Panc1 (cell line): ENCODE measurements at regions of chr1 and their contacts with region 1.

Region 1: DNA sequence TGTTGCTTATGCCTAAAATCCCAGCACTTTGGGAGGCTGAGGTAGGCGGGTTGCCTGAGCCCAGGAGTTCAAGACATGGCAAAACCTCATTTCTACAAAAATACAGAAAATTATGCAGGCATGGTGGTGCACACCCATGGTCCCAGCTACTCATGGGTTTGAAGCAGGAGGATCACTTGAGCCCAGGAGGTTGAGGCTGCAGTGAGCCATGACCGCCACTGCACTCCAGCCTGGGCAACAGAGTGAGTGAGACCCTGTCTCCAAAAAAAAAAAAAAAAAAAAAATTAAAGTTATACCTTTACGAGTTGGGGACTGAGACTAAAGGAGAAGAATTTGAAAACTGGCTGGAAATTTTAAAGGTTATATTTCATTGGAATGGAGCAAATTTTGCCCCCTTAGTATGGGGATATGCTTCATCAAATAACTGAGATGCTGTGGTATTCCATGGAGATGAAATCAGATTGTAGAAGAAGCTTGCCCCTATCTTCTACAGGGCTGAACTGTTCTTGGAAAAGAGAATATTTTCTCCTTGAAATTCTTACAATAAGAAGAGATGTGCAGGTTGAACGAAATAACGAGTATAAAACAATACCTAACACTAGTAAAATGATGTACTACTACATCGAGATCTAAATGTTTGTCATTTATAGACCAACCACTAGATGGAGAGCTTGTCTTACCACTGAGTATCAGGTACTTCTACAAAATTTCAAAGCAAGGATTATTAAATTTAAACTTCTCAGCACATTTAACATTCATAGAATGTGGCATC is 34.9 kb upstream of the SCYL3 start:
- DNase-seq: peak; percentile 24
- ATAC-seq: peak; percentile 82; the same call in 1 of the 2 replicates
- H3K4me3 ChIP-seq: no peak overlapping the region
- H3K27ac ChIP-seq: no peak overlapping the region; the same call in 1 of the 2 replicates
- H3K4me1 ChIP-seq: peaks cover 4% of the 10 kb centered on the region; the same call in 1 of the 2 replicates
- H3K27me3 ChIP-seq: no peaks in the 10 kb centered on the region
- CTCF ChIP-seq: peak; percentile 74; the same call in 1 of the 2 replicates

Region 2: DNA sequence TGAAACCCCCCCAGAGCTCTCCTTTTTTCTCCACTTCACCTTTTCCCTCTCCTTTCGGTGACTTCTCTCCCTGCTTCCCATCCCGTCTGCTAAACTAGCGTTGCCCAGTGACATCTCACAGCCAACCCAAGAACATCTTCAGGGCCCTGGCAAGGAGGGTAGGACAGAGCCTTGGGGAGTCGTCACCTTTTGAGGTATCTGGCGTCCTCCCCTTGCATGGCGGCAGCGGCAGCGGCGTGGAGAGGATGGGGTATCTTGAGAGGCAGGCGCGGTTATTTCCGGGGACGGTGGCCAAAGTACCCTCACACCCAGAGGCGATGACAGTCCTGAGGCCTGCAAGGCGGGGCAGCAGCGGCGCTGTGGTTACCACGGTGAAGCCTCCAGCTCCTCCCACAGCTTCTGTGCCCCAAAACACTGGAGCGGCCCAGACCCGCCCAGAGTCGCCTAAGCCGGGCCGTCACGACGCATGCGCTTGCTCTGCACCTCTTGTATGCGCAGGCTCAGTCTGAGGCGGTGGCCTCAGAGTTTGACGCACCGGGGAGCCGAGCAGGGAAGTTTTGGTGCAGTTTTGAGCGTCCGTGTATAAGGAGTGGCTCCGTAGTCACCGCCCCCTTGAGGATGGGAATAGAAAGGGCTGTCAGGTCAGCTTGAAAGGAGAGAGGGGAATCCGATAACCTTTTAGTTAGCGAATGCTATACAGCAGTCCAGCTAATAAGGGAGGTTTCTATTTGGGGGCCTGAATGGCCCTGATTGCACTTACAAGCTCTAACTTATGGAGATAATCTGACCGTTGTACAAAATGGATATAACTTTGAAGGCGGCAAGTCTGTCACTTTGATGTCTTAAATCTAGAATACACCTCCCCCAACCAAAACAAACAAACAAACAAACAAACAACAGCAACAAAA is 145.9 kb after region 1 on chr1 and contains the start of gene KIFAP3:
- CTCF ChIA-PET with region 1: no interaction called
- POLR2A ChIA-PET with region 1: no interaction called
- in situ Hi-C with region 1: no loop called
- intact Hi-C with region 1: loop called (anchors 10 kb)
- DNase-seq: peak; percentile 96
- ATAC-seq: peak; percentile 100
- H3K4me3 ChIP-seq: peak within 1 kb of the TSS; percentile 96 to 99
- H3K27ac ChIP-seq: peak within 1 kb of the TSS; percentile 81
- H3K4me1 ChIP-seq: peaks cover 10% of the 10 kb centered on the region
- H3K27me3 ChIP-seq: no peaks in the 10 kb centered on the region
- CTCF ChIP-seq: peak; percentile 75
- total RNA-seq, gene KIFAP3: 20.0 TPM

Region 3: DNA sequence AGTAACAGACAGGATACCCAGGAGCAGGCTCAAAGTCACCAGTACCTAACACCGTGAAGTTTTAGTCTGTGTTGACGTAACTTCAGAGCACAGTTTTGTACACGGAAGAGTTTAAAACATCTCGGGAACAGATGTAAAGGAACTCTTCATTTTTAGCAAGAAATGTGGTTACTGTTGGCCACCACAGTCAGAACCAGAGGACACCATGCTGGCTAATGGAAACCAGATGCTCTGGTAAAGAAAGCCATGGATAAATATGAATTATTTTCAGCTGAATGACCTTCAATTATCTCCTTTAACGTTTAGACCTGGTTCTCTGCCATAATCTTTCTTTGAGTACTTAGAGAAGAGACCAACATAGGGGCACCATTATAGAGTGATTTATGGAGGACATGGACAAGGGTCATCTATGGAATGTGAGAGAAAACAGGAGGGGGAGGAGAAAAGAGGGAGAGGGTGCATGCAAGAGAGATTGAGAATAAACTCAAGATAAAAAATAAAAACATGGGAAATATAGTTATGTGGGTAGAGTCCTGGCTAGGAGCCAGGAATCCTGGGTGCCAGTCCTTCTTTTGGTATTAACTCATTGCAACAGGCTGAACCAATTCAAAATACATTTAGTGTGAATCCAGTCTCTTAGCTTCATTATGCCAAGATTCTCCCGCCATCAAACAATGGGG is 333.2 kb after region 1 on chr1:
- CTCF ChIA-PET with region 1: no interaction called
- POLR2A ChIA-PET with region 1: no interaction called
- in situ Hi-C with region 1: no loop called
- intact Hi-C with region 1: no loop called
- DNase-seq: no peak
- ATAC-seq: no peak
- H3K4me3 ChIP-seq: no peak overlapping the region
- H3K27ac ChIP-seq: no peak overlapping the region
- H3K4me1 ChIP-seq: no peaks in the 10 kb centered on the region
- H3K27me3 ChIP-seq: no peaks in the 10 kb centered on the region
- CTCF ChIP-seq: no peak

Region 4: GRCh38 chr1:170670802-170671628 is 742.4 kb after region 1 on chr1:
- CTCF ChIA-PET with region 1: no interaction called
- POLR2A ChIA-PET with region 1: no interaction called
- in situ Hi-C with region 1: no loop called
- intact Hi-C with region 1: loop called (anchors 10 kb)
- DNase-seq: no peak
- ATAC-seq: no peak
- H3K4me3 ChIP-seq: peak overlapping the region in 1 of 2 experiments; percentile 13; a peak in 1 of 4 replicates
- H3K27ac ChIP-seq: no peak overlapping the region
- H3K4me1 ChIP-seq: 0 out of 2 replicates have a peak, but pooled peaks cover 3% of the 10 kb centered on the region
- H3K27me3 ChIP-seq: 0 out of 2 replicates have a peak, but pooled peaks cover 2% of the 10 kb centered on the region
- CTCF ChIP-seq: peak; percentile 80

Region 5: DNA sequence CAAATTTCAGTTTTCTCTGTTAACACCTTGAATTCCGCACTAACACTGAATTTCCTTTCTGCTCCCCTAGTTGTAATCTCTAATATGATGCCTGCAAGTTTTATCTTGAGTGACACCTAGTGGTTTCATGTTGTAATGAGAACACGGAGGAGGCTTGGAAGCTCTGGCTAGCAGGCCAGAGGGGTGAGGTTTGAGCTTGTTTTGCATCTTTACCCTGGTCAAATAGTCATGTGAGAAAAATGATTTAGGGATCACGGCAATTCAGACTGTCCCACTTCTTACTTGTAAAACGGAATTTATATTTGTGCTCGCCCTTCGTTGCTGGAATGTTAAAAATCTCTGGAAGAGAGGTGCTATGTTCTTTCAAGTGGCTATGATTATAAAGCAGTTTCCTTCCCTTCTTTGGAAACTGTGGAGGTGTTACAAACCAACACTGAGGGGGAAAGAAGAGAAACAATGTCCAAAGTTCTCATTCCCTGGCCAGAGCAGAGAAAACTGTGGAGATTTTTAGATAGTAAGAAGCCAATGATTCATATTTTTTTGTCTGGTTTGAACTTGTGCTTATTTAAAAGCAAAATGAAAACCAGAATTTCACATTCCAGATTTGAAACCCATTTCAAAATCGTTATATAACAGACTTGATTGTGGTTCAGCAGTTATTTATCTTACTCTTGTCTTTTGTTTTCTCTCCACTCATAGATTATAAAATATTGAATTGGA is 1001.4 kb after region 1 on chr1:
- CTCF ChIA-PET with region 1: no interaction called
- POLR2A ChIA-PET with region 1: no interaction called
- in situ Hi-C with region 1: no loop called
- intact Hi-C with region 1: loop called (anchors 2 kb)
- DNase-seq: peak; percentile 38
- ATAC-seq: peak; percentile 91
- H3K4me3 ChIP-seq: no peak overlapping the region
- H3K27ac ChIP-seq: no peak overlapping the region
- H3K4me1 ChIP-seq: no peaks in the 10 kb centered on the region
- H3K27me3 ChIP-seq: no peaks in the 10 kb centered on the region
- CTCF ChIP-seq: peak; percentile 81